ENCODE measurements at regions of chr11 and their contacts with region 1.

Region 1: DNA sequence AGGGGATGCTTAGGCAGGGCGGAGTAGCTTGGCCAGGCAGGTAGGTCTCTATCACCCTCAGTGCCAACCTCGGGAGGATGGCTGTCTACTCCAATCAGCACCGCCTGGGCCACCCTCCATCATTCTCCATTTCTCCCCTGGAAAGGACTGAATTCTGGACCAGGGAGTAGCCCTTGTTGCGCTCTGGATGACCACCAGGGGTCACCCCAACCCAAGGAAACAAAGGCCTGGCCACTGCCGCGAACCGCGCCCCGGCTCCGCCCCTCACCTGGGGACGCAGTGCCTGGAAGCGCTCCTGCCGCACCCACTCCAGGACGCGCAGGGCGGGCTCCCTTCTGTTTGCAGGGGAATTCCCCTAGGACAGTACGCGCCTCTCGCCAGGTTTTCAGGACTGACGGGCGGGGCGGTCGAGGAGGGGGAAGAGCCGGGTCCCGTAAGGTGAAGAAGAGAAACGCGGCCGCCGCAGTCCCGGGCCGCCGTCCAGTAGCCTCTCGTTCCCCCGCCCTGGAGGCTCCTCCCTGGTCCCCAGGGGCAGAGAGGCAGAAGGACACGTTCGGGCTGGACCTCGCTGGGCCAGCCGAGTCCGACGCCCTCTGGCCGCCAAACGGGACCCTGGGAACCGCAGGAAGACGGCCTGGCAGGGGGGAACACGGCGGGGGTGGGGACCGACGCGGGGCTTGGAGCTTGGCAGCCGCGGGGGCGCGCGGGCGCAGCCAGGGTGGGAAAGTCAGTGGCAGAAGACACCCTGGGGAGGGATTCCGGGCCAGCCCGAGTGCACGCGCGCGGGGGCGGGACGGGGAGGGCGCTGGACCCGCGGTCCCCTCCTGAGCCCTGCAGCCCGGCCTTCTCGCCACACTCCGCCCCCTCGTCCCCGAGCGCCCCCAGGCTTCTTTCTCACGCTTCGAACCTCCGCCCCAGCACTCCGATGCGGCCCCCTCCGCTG is 7.1 kb downstream of the SCN4B start:
- DNase-seq: peak; percentile 15 to 81
- H3K4me3 ChIP-seq: peak overlapping the region; percentile 59 to 70
- H3K27ac ChIP-seq: no peak overlapping the region
- H3K4me1 ChIP-seq: peaks cover 0 to 14% of the 10 kb centered on the region in 2 donors
- H3K27me3 ChIP-seq: no peaks in the 10 kb centered on the region
- CTCF ChIP-seq: peak; percentile 74 to 92 (median 91)

Region 2: GRCh38 chr11:118171269-118172062 is 25.9 kb after region 1 on chr11:
- intact Hi-C with region 1: loop called (anchors 1 kb)
- DNase-seq: peak in 1 of 2 donors; percentile 74
- H3K4me3 ChIP-seq: no peak overlapping the region
- H3K27ac ChIP-seq: no peak overlapping the region
- H3K4me1 ChIP-seq: no peaks in the 10 kb centered on the region
- H3K27me3 ChIP-seq: no peaks in the 10 kb centered on the region
- CTCF ChIP-seq: peak; percentile 73 to 88 (median 85)

Region 3: DNA sequence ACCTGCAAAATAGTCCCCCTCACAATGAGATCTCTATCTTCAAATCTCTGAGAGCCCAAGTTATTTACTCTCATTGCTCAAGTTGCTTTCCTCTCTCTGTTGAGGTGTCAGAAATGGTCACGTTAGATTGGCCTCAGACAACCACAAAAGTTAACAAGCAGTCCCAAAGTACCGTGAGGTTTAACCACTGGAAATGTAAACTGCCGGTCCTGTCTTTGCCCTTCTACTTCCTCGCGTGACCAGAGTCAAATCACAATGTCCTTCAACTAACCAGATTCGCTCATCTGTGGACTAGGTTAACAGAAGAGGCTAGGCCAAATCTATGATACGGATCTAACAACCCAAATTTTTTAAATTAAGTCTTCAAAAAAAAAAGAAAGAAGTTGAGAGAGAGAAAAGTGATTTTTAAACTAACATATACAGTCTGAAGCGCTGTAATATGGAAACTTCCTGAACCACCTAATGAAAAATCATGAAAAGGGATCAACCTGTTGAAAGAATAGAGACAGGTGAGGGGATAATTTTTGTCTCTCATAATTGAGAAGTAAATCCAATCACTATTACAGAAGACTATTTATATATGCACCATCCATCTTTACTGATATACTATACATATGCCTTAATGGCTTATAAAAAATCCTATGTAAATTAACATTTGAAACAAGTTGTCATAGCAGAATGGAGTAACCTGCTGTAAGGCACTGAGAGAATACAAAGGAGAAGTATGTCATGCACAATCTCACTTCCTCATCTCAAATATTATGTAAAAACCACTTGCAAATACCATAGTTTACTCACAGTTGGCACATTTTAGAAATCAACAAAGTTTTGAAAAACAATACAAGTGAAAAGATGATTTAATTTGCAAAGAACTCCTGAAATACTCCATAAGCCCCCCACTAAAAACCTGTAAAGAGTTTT is 82.6 kb after region 1 on chr11:
- intact Hi-C with region 1: no loop called
- DNase-seq: no peak
- H3K4me3 ChIP-seq: no peak overlapping the region
- H3K27ac ChIP-seq: peak overlapping the region in 1 of 2 donors; percentile 23
- H3K4me1 ChIP-seq: no peaks in the 10 kb centered on the region
- H3K27me3 ChIP-seq: no peaks in the 10 kb centered on the region
- CTCF ChIP-seq: no peak

Region 4: DNA sequence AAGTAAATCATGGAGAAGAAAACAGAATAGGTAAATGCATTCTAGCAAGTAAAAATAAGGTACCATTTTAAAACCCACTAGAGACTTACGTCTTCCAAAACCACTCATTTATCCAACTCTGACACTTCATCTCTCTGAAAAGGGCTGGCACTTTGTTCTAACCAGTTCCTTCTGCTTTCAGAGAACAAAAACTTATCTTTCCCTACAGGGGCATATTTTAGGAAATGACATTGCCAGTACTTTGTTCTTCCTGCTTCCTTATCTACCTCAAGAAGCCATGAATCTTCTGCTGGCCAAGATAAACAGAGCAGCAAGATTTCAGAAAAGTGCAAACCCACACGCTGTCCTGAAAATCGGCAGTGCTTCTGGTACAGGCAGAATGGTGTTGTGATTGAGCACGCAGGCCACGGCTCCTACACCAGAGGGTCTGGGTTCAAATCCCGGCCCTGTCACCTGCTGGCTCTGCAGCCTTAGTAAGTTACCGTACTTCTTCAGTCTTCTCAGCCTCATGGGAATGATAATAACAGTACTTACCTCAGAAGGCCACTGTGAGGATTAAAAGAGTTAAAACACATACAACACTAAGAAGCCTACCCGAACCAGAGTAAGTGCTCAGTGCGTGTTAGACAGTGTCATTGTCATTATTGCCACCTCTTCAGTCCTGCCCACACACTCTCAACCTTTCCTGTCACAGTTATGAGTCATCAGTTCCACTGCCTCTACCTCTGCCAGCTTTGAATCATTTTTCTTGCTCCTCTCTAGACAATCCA is 95.6 kb after region 1 on chr11:
- intact Hi-C with region 1: no loop called
- DNase-seq: no peak
- H3K4me3 ChIP-seq: no peak overlapping the region
- H3K27ac ChIP-seq: peak overlapping the region; percentile 8 to 19
- H3K4me1 ChIP-seq: no peaks in the 10 kb centered on the region
- H3K27me3 ChIP-seq: no peaks in the 10 kb centered on the region
- CTCF ChIP-seq: no peak

Region 5: GRCh38 chr11:118359295-118359958 is 213.9 kb after region 1 on chr11 and contains the start of gene UBE4A:
- intact Hi-C with region 1: loop called (anchors 5 kb)
- DNase-seq: peak; percentile 75 to 96
- H3K4me3 ChIP-seq: peak within 1 kb of the TSS; percentile 74 to 82
- H3K27ac ChIP-seq: peak within 1 kb of the TSS; percentile 40 to 44
- H3K4me1 ChIP-seq: peaks cover 0 to 8% of the 10 kb centered on the region in 2 donors
- H3K27me3 ChIP-seq: no peaks in the 10 kb centered on the region
- CTCF ChIP-seq: no peak
- total RNA-seq, gene UBE4A: 24.6 TPM

Region 6: DNA sequence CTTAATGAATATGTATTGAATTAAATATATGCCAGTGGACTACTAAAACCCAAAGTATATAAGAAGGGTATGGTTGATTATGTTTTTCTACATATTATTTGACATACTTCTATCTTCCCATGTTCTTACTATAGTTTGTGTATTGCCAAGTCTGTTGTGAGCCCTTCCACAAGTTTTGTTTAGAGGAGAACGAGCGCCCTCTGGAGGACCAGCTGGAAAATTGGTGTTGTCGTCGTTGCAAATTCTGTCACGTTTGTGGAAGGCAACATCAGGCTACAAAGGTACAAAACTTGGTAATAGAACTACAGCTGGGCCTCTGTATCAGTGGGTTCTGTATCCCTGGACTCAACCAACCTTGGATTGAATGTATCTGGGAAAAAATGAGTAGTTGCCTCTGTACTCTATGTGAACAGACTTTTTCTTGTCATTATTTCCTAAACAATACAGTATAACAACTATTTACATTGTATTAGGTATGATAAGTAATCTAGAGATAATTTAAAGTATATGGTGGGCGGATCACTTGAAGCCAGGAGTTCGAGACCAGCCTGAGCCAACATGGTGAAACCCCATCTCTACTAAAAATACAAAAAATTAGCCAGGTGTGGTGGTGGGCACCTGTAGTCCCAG is 343.0 kb after region 1 on chr11:
- intact Hi-C with region 1: loop called (anchors 10 kb)
- DNase-seq: peak in 1 of 2 donors; percentile 73
- H3K4me3 ChIP-seq: no peak overlapping the region
- H3K27ac ChIP-seq: no peak overlapping the region
- H3K4me1 ChIP-seq: no peaks in the 10 kb centered on the region
- H3K27me3 ChIP-seq: no peaks in the 10 kb centered on the region
- CTCF ChIP-seq: peak; percentile 51 to 78 (median 74)

Region 7: GRCh38 chr11:118514103-118514502 is 368.5 kb after region 1 on chr11:
- intact Hi-C with region 1: no loop called
- DNase-seq: no peak
- H3K4me3 ChIP-seq: no peak overlapping the region
- H3K27ac ChIP-seq: no peak overlapping the region
- H3K4me1 ChIP-seq: no peaks in the 10 kb centered on the region
- H3K27me3 ChIP-seq: no peaks in the 10 kb centered on the region
- CTCF ChIP-seq: no peak

Region 8: DNA sequence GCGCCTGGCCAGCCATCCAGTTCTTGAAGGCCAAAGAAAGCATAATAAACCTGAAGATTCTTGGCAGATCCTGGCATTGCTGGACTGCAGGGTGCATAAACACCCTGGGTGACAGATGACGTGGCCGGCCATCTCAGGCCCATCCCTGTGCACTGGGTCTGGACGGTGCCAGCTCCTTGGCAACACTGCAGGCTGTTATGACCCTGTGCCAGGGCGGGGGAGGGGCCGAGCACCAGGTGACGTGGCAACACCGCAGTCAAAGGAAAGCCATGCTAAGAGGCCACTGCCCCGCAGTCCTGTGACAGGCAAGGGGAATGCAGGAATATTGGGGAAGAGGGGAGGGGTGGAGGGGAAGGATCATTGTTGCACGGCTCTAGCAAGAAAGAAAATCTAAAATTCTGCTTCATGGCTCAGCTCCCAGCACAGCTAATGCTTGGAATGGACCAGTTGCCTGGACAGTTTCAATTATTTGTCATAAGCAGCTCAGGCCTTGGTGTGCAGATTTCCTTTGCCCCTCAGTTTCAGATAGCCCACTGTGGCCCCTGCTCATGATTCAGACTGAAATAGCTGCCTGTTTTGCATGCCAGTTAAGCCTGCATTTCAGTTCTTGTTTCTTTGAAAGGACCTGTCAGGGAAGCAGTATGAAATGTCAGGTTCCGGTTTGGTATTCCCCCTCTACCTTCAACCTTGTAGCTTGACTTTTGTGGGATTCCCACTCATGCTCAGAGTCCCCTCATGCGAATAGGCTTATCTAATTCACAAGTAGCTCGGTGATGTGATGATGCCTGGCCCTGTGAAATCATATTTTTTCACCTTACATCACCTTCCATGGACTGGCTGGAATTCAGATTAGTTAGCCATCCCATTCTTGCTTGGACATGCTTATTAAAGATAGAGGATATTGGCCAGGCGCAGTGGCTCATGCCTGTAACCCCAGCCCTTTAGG is 675.1 kb after region 1 on chr11:
- intact Hi-C with region 1: no loop called
- DNase-seq: peak; percentile 64 to 95
- H3K4me3 ChIP-seq: no peak overlapping the region
- H3K27ac ChIP-seq: peak overlapping the region; percentile 56 to 66
- H3K4me1 ChIP-seq: peaks cover 0 to 8% of the 10 kb centered on the region in 2 donors
- H3K27me3 ChIP-seq: no peaks in the 10 kb centered on the region
- CTCF ChIP-seq: no peak